CD8-positive, alpha-beta memory T cell (primary cell): ENCODE measurements at regions of chr19 and their contacts with region 1.

Region 1: DNA sequence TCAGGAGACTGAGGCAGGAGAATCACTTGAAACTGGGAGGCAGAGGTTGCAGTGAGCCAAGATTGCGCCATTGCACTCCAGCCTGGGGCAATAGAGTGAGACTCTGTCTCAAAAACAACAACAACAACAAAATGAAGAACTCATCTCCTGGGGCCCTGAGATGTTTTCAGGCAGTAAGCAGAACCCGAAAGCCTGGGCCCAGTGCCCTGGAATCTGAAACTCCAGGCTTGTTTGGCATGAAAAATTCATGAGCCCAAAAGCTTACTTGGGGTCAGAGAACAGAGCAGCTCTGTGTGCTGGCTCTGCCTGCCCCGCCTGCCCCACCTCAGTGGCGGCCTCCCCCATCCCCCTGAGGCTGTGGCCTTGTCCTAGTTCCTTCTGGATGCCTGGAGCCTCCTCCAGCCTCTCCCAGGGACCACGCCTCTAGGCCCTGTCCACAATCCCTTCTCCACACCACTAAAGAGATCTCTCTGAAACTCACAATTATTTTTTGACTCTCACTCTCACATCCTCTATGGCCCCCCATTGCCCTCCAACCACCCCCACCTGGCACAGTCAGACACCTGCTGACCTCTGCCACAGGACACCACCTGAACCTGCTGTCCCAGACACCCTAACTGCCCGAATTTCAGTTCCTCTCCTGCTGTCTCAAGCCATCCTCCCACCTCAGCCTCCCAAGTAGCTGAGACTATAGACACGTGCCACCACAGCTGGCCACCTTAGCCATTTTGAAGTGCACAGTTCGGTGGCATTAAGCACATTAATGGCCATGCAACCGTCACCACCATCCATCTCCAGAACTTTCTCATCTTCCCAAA is 6.9 kb upstream of the AP1M2 start:
- DNase-seq: no peak
- H3K4me3 ChIP-seq: no peak overlapping the region
- H3K4me3 Mint-ChIP-seq: peak overlapping the region in 1 of 7 donors; percentile 42
- H3K27ac ChIP-seq: no peak overlapping the region
- H3K27ac Mint-ChIP-seq: peak overlapping the region in 1 of 8 donors; percentile 68
- H3K4me1 ChIP-seq: peaks cover 16% of the 10 kb centered on the region
- H3K4me1 Mint-ChIP-seq: peaks cover 24 to 26% (median 25%) of the 10 kb centered on the region in 3 donors
- H3K27me3 ChIP-seq: no peaks in the 10 kb centered on the region
- H3K27me3 Mint-ChIP-seq: no peaks in the 10 kb centered on the region

Region 2: GRCh38 chr19:10478903-10479384 is 115.1 kb before region 1 on chr19:
- CTCF ChIA-PET with region 1: no interaction called
- POLR2A ChIA-PET with region 1: no interaction called
- DNase-seq: peak; percentile 84 to 90 (median 87)
- H3K4me3 ChIP-seq: peak overlapping the region; percentile 46
- H3K4me3 Mint-ChIP-seq: peak overlapping the region; percentile 56 to 74 (median 68)
- H3K27ac ChIP-seq: no peak overlapping the region
- H3K27ac Mint-ChIP-seq: peak overlapping the region in 7 of 8 donors; percentile 63 to 92 (median 85)
- H3K4me1 ChIP-seq: peaks cover 15% of the 10 kb centered on the region
- H3K4me1 Mint-ChIP-seq: peaks cover 10 to 22% (median 12%) of the 10 kb centered on the region in 3 donors
- H3K27me3 ChIP-seq: no peaks in the 10 kb centered on the region
- H3K27me3 Mint-ChIP-seq: no peaks in the 10 kb centered on the region

Region 3: GRCh38 chr19:10612491-10613119 is 18.6 kb after region 1 on chr19:
- CTCF ChIA-PET with region 1: interaction called, 4 read pairs
- POLR2A ChIA-PET with region 1: interaction called, 11 read pairs
- DNase-seq: no peak
- H3K4me3 ChIP-seq: no peak overlapping the region
- H3K4me3 Mint-ChIP-seq: peak overlapping the region in 1 of 7 donors; percentile 66
- H3K27ac ChIP-seq: no peak overlapping the region
- H3K27ac Mint-ChIP-seq: peak overlapping the region in 3 of 8 donors; percentile 7 to 66 (median 60)
- H3K4me1 ChIP-seq: peaks cover 15% of the 10 kb centered on the region
- H3K4me1 Mint-ChIP-seq: peaks cover 29 to 52% (median 30%) of the 10 kb centered on the region in 3 donors
- H3K27me3 ChIP-seq: no peaks in the 10 kb centered on the region
- H3K27me3 Mint-ChIP-seq: peaks cover 0 to 3% of the 10 kb centered on the region in 2 donors